ENCODE measurements at regions of chr13 and their contacts with region 1.

Region 1: GRCh38 chr13:79423801-79424642 is 18.0 kb upstream of the RBM26 start:
- DNase-seq: no peak
- ATAC-seq: peak; percentile 85
- H3K4me3 ChIP-seq: no peak overlapping the region
- H3K27ac ChIP-seq: no peak overlapping the region
- H3K4me1 ChIP-seq: no peaks in the 10 kb centered on the region
- H3K27me3 ChIP-seq: no peaks in the 10 kb centered on the region
- CTCF ChIP-seq: peak; percentile 46 to 71 (median 56); a peak in 5 of 6 replicates
- EP300 ChIP-seq: no peak
- POLR2A ChIP-seq: no peak
- RAD21 ChIP-seq: peak; percentile 90

Region 2: DNA sequence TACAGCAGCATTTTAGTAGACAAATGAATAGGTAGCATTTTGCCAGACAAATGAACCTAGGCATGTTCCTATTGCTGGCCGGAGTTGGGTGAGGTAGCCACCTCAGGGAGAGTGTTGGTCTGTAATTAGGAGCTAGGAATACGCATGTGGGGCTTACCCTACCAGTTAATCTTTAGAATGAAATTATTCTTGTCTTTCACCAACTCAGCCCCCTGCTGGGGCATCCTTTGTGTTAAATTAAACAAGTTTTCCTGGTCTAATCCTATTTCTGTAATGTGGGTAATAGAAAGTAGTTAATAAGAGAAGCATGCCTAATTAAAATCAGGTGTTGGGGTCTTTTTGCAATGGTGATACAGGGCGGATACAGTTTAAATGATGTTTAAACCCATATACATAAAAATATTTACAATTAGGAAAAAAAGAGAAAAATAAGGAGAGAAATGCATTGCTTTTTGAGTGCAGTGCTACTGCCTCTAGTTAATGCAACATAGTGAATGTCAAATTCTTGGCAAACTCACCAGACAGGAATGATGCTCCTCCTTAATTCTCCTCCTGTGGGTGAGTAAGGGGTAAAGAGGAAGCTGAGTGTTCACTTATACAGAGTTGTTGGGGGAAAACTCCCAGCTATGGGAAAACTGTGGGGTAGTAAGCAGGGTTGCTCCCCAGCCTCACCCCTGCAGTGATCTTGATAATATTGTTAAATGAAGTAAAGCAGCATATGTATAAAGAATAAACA is 1229.0 kb before region 1 on chr13:
- CTCF ChIA-PET with region 1: no interaction called
- POLR2A ChIA-PET with region 1: no interaction called
- RAD21 ChIA-PET with region 1: no interaction called
- SMC1A ChIA-PET with region 1: no interaction called
- in situ Hi-C with region 1: no loop called
- intact Hi-C with region 1: no loop called
- DNase-seq: no peak
- ATAC-seq: peak; percentile 20
- H3K4me3 ChIP-seq: no peak overlapping the region
- H3K27ac ChIP-seq: no peak overlapping the region
- H3K4me1 ChIP-seq: no peaks in the 10 kb centered on the region
- H3K27me3 ChIP-seq: no peaks in the 10 kb centered on the region
- CTCF ChIP-seq: no peak
- EP300 ChIP-seq: no peak
- POLR2A ChIP-seq: no peak
- RAD21 ChIP-seq: no peak

Region 3: GRCh38 chr13:79413521-79413920 is 10.5 kb before region 1 on chr13:
- CTCF ChIA-PET with region 1: interaction called, 23 read pairs
- POLR2A ChIA-PET with region 1: no interaction called
- RAD21 ChIA-PET with region 1: interaction called, 18 read pairs
- SMC1A ChIA-PET with region 1: interaction called, 12 read pairs
- in situ Hi-C with region 1: no loop called
- intact Hi-C with region 1: no loop called
- DNase-seq: no peak
- ATAC-seq: no peak
- H3K4me3 ChIP-seq: no peak overlapping the region
- H3K27ac ChIP-seq: no peak overlapping the region
- H3K4me1 ChIP-seq: no peaks in the 10 kb centered on the region
- H3K27me3 ChIP-seq: no peaks in the 10 kb centered on the region
- CTCF ChIP-seq: no peak
- EP300 ChIP-seq: no peak
- POLR2A ChIP-seq: no peak
- RAD21 ChIP-seq: no peak

Region 4: DNA sequence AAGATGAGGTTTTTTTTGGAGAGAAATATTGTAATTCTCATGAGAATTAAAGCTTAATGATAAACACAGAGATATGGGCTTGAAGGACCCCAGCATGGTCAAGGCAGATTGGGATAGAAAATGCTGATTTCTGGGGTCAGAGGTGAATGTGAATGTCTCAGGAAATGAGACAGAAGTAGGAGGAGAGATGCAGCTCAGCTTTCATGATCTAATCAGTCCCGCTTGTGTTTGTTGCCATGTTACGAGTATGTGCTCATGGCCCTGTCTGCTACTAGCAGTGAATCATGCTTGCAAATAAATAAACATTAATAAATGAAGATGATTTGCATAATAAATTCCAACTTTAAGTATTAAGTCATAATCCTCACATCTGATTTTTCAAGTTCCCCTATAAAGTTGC is 33.9 kb after region 1 on chr13:
- CTCF ChIA-PET with region 1: interaction called, 11 read pairs
- POLR2A ChIA-PET with region 1: interaction called, 3 read pairs
- RAD21 ChIA-PET with region 1: interaction called, 7 read pairs
- SMC1A ChIA-PET with region 1: interaction called, 12 read pairs
- in situ Hi-C with region 1: no loop called
- intact Hi-C with region 1: no loop called
- DNase-seq: no peak
- ATAC-seq: peak; percentile 58; the same call in 2 of the 3 replicates
- H3K4me3 ChIP-seq: no peak overlapping the region
- H3K27ac ChIP-seq: no peak overlapping the region
- H3K4me1 ChIP-seq: no peaks in the 10 kb centered on the region
- H3K27me3 ChIP-seq: no peaks in the 10 kb centered on the region
- CTCF ChIP-seq: no peak
- EP300 ChIP-seq: no peak
- POLR2A ChIP-seq: no peak
- RAD21 ChIP-seq: no peak

Region 5: DNA sequence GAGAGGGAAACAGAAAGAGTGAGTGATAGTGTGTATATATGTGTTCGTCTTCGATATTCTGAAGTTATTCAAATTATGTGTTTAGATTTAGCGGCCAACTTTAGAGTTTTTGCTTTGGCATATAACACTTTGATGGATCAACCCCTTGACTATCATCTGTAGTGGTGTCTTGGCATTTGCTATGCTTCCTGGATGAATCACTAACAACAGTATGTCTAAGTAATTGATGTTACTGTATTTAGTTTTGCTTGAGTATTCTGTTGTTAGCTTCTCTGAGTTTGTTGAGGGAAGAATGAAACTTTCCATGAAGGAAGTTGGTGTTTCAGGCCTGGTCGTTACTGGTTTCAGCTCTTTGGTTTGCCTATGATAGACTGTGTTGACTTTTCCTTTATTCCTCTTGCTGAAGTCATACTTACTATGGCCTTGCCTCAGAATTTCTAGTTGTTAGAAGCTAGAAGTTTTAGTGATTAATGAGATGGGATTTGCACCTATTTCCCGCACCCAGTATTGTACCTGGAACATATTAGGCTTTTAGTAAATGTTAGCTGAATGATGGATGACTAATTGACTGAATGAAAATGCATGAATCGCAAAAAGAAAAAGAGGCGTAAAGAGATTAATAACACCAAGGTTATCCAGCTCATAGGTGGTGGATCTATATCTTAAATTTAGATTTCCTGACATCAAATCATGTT is 77.7 kb after region 1 on chr13:
- CTCF ChIA-PET with region 1: interaction called, 14 read pairs
- POLR2A ChIA-PET with region 1: no interaction called
- RAD21 ChIA-PET with region 1: interaction called, 9 read pairs
- SMC1A ChIA-PET with region 1: interaction called, 14 read pairs
- in situ Hi-C with region 1: no loop called
- intact Hi-C with region 1: no loop called
- DNase-seq: no peak
- ATAC-seq: no peak
- H3K4me3 ChIP-seq: no peak overlapping the region
- H3K27ac ChIP-seq: no peak overlapping the region
- H3K4me1 ChIP-seq: no peaks in the 10 kb centered on the region; the same call in 1 of the 2 replicates
- H3K27me3 ChIP-seq: no peaks in the 10 kb centered on the region
- CTCF ChIP-seq: no peak
- EP300 ChIP-seq: no peak
- POLR2A ChIP-seq: no peak
- RAD21 ChIP-seq: no peak

Region 6: GRCh38 chr13:79533781-79534400 is 109.9 kb after region 1 on chr13:
- CTCF ChIA-PET with region 1: interaction called, 564 read pairs
- POLR2A ChIA-PET with region 1: interaction called, 3 read pairs
- RAD21 ChIA-PET with region 1: interaction called, 435 read pairs
- SMC1A ChIA-PET with region 1: interaction called, 427 read pairs
- in situ Hi-C with region 1: loop called (anchors 5 kb)
- intact Hi-C with region 1: no loop called
- DNase-seq: no peak
- ATAC-seq: no peak
- H3K4me3 ChIP-seq: no peak overlapping the region
- H3K27ac ChIP-seq: no peak overlapping the region
- H3K4me1 ChIP-seq: no peaks in the 10 kb centered on the region
- H3K27me3 ChIP-seq: no peaks in the 10 kb centered on the region
- CTCF ChIP-seq: no peak
- EP300 ChIP-seq: no peak
- POLR2A ChIP-seq: no peak
- RAD21 ChIP-seq: no peak

Region 7: GRCh38 chr13:80196756-80197155 is 772.7 kb after region 1 on chr13:
- CTCF ChIA-PET with region 1: no interaction called
- POLR2A ChIA-PET with region 1: no interaction called
- RAD21 ChIA-PET with region 1: no interaction called
- SMC1A ChIA-PET with region 1: no interaction called
- in situ Hi-C with region 1: no loop called
- intact Hi-C with region 1: no loop called
- DNase-seq: no peak
- ATAC-seq: peak; percentile 34; the same call in 2 of the 3 replicates
- H3K4me3 ChIP-seq: no peak overlapping the region
- H3K27ac ChIP-seq: no peak overlapping the region
- H3K4me1 ChIP-seq: no peaks in the 10 kb centered on the region
- H3K27me3 ChIP-seq: no peaks in the 10 kb centered on the region
- CTCF ChIP-seq: no peak
- EP300 ChIP-seq: no peak
- POLR2A ChIP-seq: no peak
- RAD21 ChIP-seq: no peak

Region 8: GRCh38 chr13:81017513-81018152 is 1593.6 kb after region 1 on chr13:
- CTCF ChIA-PET with region 1: interaction called, 4 read pairs
- POLR2A ChIA-PET with region 1: no interaction called
- RAD21 ChIA-PET with region 1: interaction called, 15 read pairs
- SMC1A ChIA-PET with region 1: interaction called, 3 read pairs
- in situ Hi-C with region 1: no loop called
- intact Hi-C with region 1: no loop called
- DNase-seq: no peak
- ATAC-seq: peak; percentile 88
- H3K4me3 ChIP-seq: no peak overlapping the region
- H3K27ac ChIP-seq: no peak overlapping the region
- H3K4me1 ChIP-seq: no peaks in the 10 kb centered on the region
- H3K27me3 ChIP-seq: no peaks in the 10 kb centered on the region
- CTCF ChIP-seq: peak; percentile 38 to 54 (median 39); a peak in 3 of 6 replicates
- EP300 ChIP-seq: no peak
- POLR2A ChIP-seq: no peak
- RAD21 ChIP-seq: peak; percentile 72

Measured in GM12878 (cell line).